ENCODE measurements at regions of chr16 and their contacts with region 1.

Region 1: GRCh38 chr16:18801197-18801972 is at the start of gene ARL6IP1:
- DNase-seq: peak; percentile 94
- ATAC-seq: peak; percentile 94
- H3K4me3 Mint-ChIP-seq: peak within 1 kb of the TSS; percentile 95
- H3K27ac Mint-ChIP-seq: peak within 1 kb of the TSS; percentile 94
- H3K4me1 Mint-ChIP-seq: peaks cover 35% of the 10 kb centered on the region
- H3K27me3 Mint-ChIP-seq: no peaks in the 10 kb centered on the region
- CTCF ChIP-seq: peak; percentile 37
- total RNA-seq, gene ARL6IP1: 94.0 and 98.3 TPM in 2 replicates

Region 2: DNA sequence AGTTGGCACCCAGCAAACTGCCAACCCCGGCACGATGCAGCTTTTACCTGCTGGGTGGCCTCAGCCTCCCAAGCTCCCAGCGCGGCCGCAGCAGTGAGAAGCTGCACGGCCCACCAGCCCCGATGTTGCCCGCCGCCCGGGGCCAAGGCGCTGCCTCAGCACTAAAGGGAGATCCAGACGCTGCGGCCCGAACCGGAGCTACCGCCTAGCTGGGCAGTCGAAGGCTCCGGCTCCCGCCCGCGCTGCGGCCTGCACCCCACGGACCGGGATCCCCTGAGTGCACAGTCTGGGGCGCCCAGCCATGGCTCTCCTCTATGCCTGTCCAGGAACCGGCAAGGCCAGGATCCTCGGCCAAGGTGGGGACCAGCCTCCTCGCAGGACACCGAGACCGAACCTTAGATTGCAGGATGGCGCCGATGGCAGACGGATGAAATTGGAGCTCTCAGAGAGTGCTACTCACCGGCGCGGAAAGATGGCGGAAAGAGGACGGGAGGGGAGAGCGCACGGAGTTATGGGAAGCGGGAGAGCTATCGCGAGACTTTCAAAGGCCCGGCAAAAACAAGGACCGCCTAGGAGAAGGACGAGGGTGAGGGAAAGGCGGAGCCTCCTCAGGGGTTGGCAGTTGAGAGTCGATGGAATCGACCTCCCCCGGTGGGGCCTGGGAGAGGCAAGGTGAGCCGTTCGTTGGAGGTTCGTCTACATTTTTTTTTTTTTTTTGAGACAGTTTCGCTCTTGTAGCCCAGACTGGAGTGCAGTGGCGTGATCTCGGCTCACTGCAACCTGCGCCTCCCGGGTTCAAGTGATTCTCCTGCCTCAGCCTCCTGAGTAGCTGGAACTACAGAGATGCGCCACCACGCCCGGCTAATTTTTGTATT is 11.3 kb before region 1 on chr16 and contains the start of gene RPS15A:
- CTCF ChIA-PET with region 1: interaction called, 31 read pairs
- POLR2A ChIA-PET with region 1: interaction called, 156 read pairs
- intact Hi-C with region 1: loop called (anchors 1 kb)
- DNase-seq: peak; percentile 79
- ATAC-seq: peak; percentile 98
- H3K4me3 Mint-ChIP-seq: peak within 1 kb of the TSS; percentile 98
- H3K27ac Mint-ChIP-seq: peak within 1 kb of the TSS; percentile 89
- H3K4me1 Mint-ChIP-seq: peaks cover 51% of the 10 kb centered on the region
- H3K27me3 Mint-ChIP-seq: no peaks in the 10 kb centered on the region
- CTCF ChIP-seq: no peak
- total RNA-seq, gene RPS15A: 2,443 and 2,956 TPM in 2 replicates

Region 3: GRCh38 chr16:18816286-18816685 is 14.9 kb after region 1 on chr16:
- CTCF ChIA-PET with region 1: interaction called, 3 read pairs
- POLR2A ChIA-PET with region 1: interaction called, 13 read pairs
- intact Hi-C with region 1: no loop called
- DNase-seq: no peak
- ATAC-seq: no peak
- H3K4me3 Mint-ChIP-seq: no peak overlapping the region
- H3K27ac Mint-ChIP-seq: no peak overlapping the region
- H3K4me1 Mint-ChIP-seq: peaks cover 5% of the 10 kb centered on the region
- H3K27me3 Mint-ChIP-seq: no peaks in the 10 kb centered on the region
- CTCF ChIP-seq: no peak

Region 4: DNA sequence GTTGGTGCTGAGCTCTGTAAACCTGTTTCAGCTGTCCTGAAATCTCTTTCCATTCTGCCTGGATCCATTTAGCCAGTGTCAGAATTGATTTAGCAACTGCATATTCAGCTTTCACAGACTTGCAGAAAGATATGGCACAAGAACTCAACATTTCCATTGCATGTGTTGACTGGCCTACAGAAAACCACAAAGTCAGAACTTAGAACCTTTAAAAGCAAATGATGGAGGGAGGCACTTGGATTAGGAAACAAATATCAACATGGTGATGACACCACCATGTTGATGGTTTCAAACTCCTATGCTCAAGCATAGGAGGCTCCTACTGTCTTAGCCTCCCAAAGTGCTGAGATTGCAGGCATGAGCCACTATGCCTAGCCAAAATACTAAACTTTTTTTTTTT is 52.3 kb after region 1 on chr16:
- CTCF ChIA-PET with region 1: interaction called, 3 read pairs
- POLR2A ChIA-PET with region 1: no interaction called
- intact Hi-C with region 1: loop called (anchors 10 kb)
- DNase-seq: no peak
- ATAC-seq: no peak
- H3K4me3 Mint-ChIP-seq: no peak overlapping the region
- H3K27ac Mint-ChIP-seq: no peak overlapping the region
- H3K4me1 Mint-ChIP-seq: no peaks in the 10 kb centered on the region
- H3K27me3 Mint-ChIP-seq: no peaks in the 10 kb centered on the region
- CTCF ChIP-seq: no peak

Region 5: DNA sequence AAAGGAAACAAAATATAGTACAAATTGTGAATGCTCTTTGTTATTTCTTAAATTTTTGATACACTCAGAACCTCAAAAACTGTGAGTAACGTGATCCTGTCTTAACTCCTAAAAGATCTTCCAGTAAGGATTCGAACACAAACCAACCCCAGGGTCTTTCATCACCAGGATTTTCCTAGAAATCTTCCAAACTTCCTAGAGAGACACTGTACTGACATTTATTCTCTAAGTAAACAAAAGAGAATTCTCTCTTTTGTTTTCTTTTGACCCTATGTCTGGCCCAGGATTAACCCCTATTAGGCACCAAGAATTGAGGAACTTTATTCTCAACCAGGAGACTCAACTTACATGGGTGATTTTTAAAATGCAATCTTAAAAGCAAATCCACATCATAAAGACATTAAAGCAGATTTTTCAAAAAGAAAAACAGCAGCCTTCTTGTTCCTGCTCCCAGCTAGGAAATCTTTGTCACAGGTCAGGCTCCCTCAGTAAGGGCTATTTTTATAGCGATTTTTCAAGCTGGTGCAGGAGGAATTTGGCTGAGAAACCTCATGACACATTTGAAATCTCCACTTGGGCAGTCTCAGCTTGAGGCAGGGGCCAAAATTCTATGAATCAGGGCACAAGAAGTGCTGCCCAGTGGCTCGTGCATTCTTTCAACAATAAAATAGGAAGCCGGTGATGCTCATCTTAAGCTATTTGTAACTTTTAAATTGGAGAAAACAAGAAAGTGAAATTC is 131.0 kb after region 1 on chr16:
- CTCF ChIA-PET with region 1: no interaction called
- POLR2A ChIA-PET with region 1: interaction called, 12 read pairs
- intact Hi-C with region 1: no loop called
- DNase-seq: no peak
- ATAC-seq: no peak
- H3K4me3 Mint-ChIP-seq: no peak overlapping the region
- H3K27ac Mint-ChIP-seq: peak overlapping the region; percentile 54
- H3K4me1 Mint-ChIP-seq: peaks cover 15% of the 10 kb centered on the region
- H3K27me3 Mint-ChIP-seq: peaks cover 4% of the 10 kb centered on the region
- CTCF ChIP-seq: no peak

Region 6: GRCh38 chr16:18969050-18969854 is 167.9 kb after region 1 on chr16:
- CTCF ChIA-PET with region 1: interaction called, 6 read pairs
- POLR2A ChIA-PET with region 1: no interaction called
- intact Hi-C with region 1: loop called (anchors 1 kb)
- DNase-seq: peak; percentile 70
- ATAC-seq: peak; percentile 78
- H3K4me3 Mint-ChIP-seq: peak overlapping the region; percentile 50
- H3K27ac Mint-ChIP-seq: no peak overlapping the region
- H3K4me1 Mint-ChIP-seq: peaks cover 6% of the 10 kb centered on the region
- H3K27me3 Mint-ChIP-seq: peaks cover 4% of the 10 kb centered on the region
- CTCF ChIP-seq: peak; percentile 93

Region 7: DNA sequence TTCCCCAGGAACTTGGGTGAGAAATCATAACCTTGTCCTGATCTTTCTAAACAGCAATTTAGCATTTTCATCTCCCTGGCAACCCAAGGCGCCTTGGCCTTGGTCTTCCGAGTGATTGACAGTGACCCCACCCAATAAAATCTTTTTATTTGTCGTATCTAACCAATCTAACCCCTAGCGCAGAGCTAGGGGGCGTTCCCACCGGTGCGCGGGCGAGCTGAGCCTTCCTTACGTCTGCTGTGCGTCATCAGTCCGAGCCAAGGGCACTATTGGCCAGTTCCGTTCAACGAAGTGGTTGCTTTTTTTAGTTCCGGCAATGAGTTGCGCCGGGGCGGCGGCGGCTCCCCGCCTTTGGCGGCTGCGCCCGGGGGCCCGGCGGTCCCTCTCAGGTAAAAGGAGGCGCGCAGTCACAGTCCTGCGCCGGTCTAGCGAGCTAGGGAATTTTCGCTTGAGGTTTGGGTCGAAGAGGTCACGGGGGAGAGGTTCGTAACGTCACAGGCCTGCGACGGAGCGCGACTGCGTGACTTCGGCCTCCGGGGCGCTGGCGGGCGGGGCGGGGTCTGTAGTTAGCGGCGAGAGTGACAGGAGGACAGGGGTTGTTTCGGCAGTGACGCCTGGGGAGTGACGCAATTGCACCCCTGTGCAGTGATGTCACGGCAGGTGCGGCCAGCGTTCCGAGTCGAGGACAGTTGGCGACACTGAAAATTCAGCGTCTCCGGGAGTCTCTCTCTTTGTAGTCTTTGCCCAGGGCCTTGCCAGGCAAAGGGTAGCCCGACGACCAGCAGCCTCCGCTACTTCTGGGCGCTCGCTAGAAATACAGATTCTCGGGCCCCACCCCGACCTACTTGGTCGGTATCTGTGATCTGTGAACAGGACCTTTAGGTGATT is 266.2 kb after region 1 on chr16 and contains the start of gene COQ7:
- CTCF ChIA-PET with region 1: no interaction called
- POLR2A ChIA-PET with region 1: interaction called, 5 read pairs
- intact Hi-C with region 1: loop called (anchors 1 kb)
- DNase-seq: peak; percentile 95
- ATAC-seq: peak; percentile 90
- H3K4me3 Mint-ChIP-seq: peak within 1 kb of the TSS; percentile 93
- H3K27ac Mint-ChIP-seq: peak within 1 kb of the TSS; percentile 97
- H3K4me1 Mint-ChIP-seq: peaks cover 17% of the 10 kb centered on the region
- H3K27me3 Mint-ChIP-seq: peaks cover 4% of the 10 kb centered on the region
- CTCF ChIP-seq: no peak
- total RNA-seq, gene COQ7: 13.6 and 17.5 TPM in 2 replicates

Measured in activated B cell treated with CpG ODN at 0.5 μM for 24 hours (primary cell).